Endothelial cell of umbilical vein (primary cell): ENCODE measurements at regions of chr6 and their contacts with region 1.

Region 1: DNA sequence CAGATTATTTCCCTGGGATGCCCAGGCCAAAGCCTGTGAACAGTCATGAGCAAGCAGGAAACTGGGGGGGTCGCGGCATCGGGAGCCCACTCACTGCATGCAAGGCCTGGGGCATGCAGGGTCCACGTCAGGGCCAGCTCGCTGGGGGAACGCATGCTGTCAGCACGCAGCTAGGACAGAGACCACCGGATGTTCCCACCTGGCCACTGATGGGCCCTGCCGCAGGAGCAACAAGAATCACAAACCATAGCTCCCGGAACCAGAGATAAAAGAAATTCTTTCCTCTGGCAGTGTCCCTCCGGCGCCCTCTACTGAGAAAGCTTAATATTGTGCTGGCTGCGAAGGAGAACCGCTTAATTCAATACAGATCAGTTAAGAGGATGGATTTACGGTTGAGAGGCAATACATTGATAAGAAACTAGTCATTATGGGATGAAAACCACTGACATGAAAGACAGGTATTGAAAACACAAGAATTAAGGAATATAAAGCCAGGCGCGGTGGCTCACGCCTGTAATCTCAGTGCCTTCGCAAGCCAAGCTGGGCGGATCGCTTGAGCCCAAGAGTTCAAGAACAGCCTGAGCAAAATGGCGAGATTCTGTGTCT is 32.6 kb downstream of the C6orf15 start:
- DNase-seq: peak; percentile 73
- H3K4me3 ChIP-seq: peak overlapping the region in 1 of 3 experiments; percentile 40
- H3K27ac ChIP-seq: no peak overlapping the region
- H3K4me1 ChIP-seq: peaks cover 4% of the 10 kb centered on the region
- H3K27me3 ChIP-seq: peaks cover 2 to 3% of the 10 kb centered on the region in 2 experiments
- CTCF ChIP-seq: peak; percentile 68 to 80
- POLR2A ChIP-seq: no peak

Region 2: GRCh38 chr6:30828027-30828960 is 251.5 kb before region 1 on chr6:
- CTCF ChIA-PET with region 1: interaction called, 42 read pairs
- POLR2A ChIA-PET with region 1: no interaction called
- dilution Hi-C with region 1: no loop called
- intact Hi-C with region 1: loop called (anchors 2 kb)
- DNase-seq: peak; percentile 92
- H3K4me3 ChIP-seq: no peak overlapping the region
- H3K27ac ChIP-seq: no peak overlapping the region
- H3K4me1 ChIP-seq: peaks cover 15% of the 10 kb centered on the region
- H3K27me3 ChIP-seq: no peaks in the 10 kb centered on the region
- CTCF ChIP-seq: peak; percentile 89
- POLR2A ChIP-seq: no peak

Region 3: GRCh38 chr6:30914076-30914853 is 165.5 kb before region 1 on chr6 and contains the start of gene VARS2:
- CTCF ChIA-PET with region 1: interaction called, 141 read pairs
- POLR2A ChIA-PET with region 1: no interaction called
- dilution Hi-C with region 1: no loop called
- intact Hi-C with region 1: loop called (anchors 1 kb)
- DNase-seq: peak; percentile 95
- H3K4me3 ChIP-seq: peak within 1 kb of the TSS; percentile 37 to 54 (median 44)
- H3K27ac ChIP-seq: peak within 1 kb of the TSS; percentile 67
- H3K4me1 ChIP-seq: peaks cover 25% of the 10 kb centered on the region
- H3K27me3 ChIP-seq: no peaks in the 10 kb centered on the region
- CTCF ChIP-seq: peak in 1 of 2 donors; percentile 41
- POLR2A ChIP-seq: peak; percentile 91
- total RNA-seq, gene VARS2: 32.5 and 34.3 TPM in 2 replicates

Region 4: DNA sequence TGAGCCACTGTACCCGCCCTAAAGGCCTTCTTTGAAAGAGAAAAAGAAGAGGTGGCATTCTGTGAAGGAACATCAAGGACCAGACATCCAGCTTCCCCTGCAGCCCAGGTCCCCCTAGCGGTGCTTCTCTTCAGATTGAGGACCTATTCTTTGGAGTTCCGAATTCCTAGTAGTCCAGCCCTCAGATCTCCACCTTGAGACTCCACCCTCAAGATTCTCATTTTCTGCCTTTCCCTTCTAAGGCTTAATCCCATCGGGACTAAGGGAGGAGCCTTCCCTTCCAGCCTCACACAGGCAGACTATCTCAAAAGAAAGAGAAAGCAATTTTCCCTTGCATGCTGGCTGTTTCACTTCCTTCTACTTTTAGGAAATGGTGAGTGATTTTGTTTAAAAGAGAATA is 37.0 kb before region 1 on chr6:
- CTCF ChIA-PET with region 1: interaction called, 10 read pairs
- POLR2A ChIA-PET with region 1: no interaction called
- dilution Hi-C with region 1: no loop called
- intact Hi-C with region 1: no loop called
- DNase-seq: peak; percentile 38
- H3K4me3 ChIP-seq: no peak overlapping the region
- H3K27ac ChIP-seq: no peak overlapping the region
- H3K4me1 ChIP-seq: no peaks in the 10 kb centered on the region
- H3K27me3 ChIP-seq: peaks cover 8 to 12% of the 10 kb centered on the region in 2 experiments
- CTCF ChIP-seq: peak; percentile 23 to 69
- POLR2A ChIP-seq: no peak

Region 5: DNA sequence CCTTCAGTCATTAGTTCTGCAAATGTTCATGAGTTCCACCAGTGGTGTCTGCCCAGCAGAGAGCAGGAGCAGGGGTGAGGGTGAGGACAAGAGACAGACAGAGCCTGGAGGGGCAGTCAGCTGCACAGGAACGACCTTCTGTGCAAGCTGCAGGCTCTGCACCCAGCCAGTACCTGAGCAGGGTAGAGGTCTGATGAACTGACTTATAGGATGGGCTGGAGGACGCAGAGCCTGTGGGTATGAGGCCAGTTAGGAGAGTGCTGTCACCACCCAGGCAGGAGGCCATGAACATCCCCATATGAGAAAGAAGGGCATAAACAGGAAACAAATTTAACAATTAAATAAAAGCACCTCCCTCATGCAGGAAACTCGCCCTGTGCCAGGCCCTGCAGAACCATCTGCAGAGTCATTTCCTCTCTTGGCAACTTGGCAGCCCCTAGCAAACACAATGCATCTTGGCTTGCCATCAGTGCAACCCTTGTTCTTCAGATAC is 14.7 kb after region 1 on chr6:
- CTCF ChIA-PET with region 1: interaction called, 24 read pairs
- POLR2A ChIA-PET with region 1: no interaction called
- dilution Hi-C with region 1: no loop called
- intact Hi-C with region 1: no loop called
- DNase-seq: peak; percentile 88
- H3K4me3 ChIP-seq: peak overlapping the region in 1 of 3 experiments; percentile 23
- H3K27ac ChIP-seq: peak overlapping the region; percentile 41
- H3K4me1 ChIP-seq: peaks cover 41% of the 10 kb centered on the region
- H3K27me3 ChIP-seq: no peaks in the 10 kb centered on the region
- CTCF ChIP-seq: no peak
- POLR2A ChIP-seq: peak; percentile 46

Region 6: DNA sequence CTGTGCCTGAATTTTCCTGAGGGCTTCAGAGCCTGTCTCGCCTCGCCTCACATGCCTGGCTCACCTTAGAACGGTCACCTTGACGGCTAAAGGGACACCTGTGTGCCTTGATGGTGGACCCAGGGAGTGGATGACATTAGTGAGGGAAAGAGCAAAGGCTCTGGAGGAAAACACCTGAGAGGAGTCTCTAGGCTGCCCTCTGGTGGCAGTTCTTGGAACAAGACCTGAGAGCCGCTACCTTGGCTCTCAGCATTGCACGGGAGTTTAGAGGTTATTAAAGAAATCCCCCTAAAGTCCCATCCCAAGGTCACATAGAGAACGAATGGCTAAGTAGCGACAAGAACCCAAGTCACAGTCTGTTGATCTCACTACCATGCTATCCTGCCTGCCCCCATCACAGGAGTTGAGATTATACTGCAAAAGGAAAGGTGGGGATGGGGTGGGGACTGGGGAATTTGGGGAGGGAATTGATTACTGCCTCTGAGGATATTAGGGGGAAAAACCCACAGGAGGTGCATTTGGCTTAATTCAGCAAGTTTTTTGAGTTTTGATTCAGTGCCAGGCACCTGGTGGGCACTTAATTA is 48.4 kb after region 1 on chr6:
- CTCF ChIA-PET with region 1: interaction called, 11 read pairs
- POLR2A ChIA-PET with region 1: no interaction called
- dilution Hi-C with region 1: no loop called
- intact Hi-C with region 1: no loop called
- DNase-seq: peak; percentile 47
- H3K4me3 ChIP-seq: no peak overlapping the region
- H3K27ac ChIP-seq: no peak overlapping the region
- H3K4me1 ChIP-seq: peaks cover 23% of the 10 kb centered on the region
- H3K27me3 ChIP-seq: peaks cover 3 to 6% of the 10 kb centered on the region in 2 experiments
- CTCF ChIP-seq: peak; percentile 80 to 89
- POLR2A ChIP-seq: no peak

Region 7: DNA sequence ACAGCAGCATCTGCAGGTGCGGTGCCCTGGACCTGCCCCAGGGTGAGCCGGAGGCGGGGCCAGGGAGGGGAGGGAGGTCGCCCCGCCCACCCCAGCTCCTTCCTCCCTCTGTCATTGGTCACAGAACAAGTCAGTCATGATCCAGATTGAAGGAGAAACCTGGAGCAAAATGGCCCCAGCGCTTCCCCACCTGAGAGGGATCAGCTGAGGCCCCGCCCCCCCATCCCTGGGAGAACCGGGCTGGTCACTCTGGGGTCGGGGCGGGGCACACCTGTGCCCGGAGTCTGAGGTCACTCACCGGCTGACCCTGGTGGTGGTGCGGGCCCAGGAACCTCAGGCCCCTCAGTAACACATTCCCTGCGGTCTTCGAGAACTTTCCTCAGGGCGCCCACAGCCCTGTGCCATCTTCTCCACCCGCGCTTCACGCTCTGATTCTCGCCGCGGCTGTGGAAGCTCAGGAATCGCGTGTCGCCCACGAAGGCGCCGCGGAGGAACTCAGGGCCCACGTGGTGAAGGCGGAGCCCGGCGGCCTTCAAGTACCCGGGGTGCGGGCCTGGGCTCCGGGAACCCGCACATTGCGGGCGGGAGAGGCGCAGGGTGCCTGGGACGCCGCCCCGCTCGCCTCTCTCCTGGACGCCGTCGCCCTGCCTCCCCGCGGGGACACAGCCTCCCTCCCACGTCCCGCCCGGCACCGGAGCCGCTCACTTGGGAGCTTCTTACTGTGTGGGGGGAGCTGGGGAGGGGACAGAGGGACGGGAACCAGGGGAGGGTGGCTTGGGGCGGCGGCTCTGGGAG is 228.5 kb after region 1 on chr6:
- CTCF ChIA-PET with region 1: no interaction called
- POLR2A ChIA-PET with region 1: no interaction called
- dilution Hi-C with region 1: no loop called
- intact Hi-C with region 1: no loop called
- DNase-seq: no peak
- H3K4me3 ChIP-seq: no peak overlapping the region
- H3K27ac ChIP-seq: no peak overlapping the region
- H3K4me1 ChIP-seq: no peaks in the 10 kb centered on the region
- H3K27me3 ChIP-seq: peaks cover 44% of the 10 kb centered on the region in 2 experiments
- CTCF ChIP-seq: no peak
- POLR2A ChIP-seq: no peak